Right cardiac atrium (tissue), 5 donors: ENCODE measurements at regions of chr3 and their contacts with region 1.

Region 1: DNA sequence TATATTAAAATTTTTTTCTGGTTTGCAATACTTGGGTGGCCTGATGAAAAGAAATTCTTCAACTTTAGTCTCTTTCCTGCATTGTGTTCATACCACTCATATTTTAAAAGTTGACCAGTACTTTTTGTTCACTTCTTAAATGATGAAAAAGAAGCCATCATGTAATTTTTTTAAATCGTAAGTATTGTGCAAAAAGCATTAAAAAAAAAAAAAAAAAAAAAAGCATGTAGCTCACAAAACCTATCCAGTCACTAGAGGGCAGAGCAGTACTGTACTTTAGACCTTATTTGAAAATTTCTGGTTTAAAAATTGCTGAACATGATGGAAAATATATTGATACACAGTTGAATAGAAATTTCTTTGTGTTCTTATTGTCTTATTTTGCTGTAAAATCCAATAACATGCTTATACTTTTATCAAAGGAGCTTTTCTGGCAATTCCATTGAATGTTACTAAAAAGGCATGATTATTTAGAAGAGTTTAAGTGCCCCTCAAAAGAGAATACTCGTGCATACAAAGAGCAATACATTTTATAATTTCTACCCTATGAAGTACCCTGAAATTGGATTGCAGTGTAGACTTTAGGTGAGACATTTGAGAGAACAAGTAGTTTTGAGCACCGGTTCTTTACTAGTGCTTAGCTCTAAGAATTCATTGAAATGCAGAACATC is 137.7 kb downstream of the BBX start:
- DNase-seq: no peak
- ATAC-seq: no peak
- H3K4me3 ChIP-seq: no peak overlapping the region
- H3K27ac ChIP-seq: no peak overlapping the region
- H3K4me1 ChIP-seq: peaks cover 3% of the 10 kb centered on the region
- H3K27me3 ChIP-seq: no peaks in the 10 kb centered on the region

Region 2: GRCh38 chr3:107458871-107459270 is 201.6 kb before region 1 on chr3:
- intact Hi-C with region 1: no loop called
- DNase-seq: peak in 1 of 3 donors; percentile 31
- ATAC-seq: no peak
- H3K4me3 ChIP-seq: no peak overlapping the region
- H3K27ac ChIP-seq: no peak overlapping the region
- H3K4me1 ChIP-seq: no peaks in the 10 kb centered on the region
- H3K27me3 ChIP-seq: no peaks in the 10 kb centered on the region

Region 3: GRCh38 chr3:107574650-107575049 is 85.8 kb before region 1 on chr3:
- intact Hi-C with region 1: loop called in 1 of 4 experiments (anchors 10 kb)
- DNase-seq: no peak
- ATAC-seq: peak; percentile 59 to 78
- H3K4me3 ChIP-seq: no peak overlapping the region
- H3K27ac ChIP-seq: no peak overlapping the region
- H3K4me1 ChIP-seq: peaks cover 4% of the 10 kb centered on the region
- H3K27me3 ChIP-seq: no peaks in the 10 kb centered on the region